Posterior vena cava (tissue), 2 donors: ENCODE measurements at regions of chr15 and their contacts with region 1.

Region 1: GRCh38 chr15:23897531-23897930 is 210.4 kb upstream of the NDN start:
- DNase-seq: no peak

Region 2: GRCh38 chr15:23857028-23857641 is 40.4 kb before region 1 on chr15:
- intact Hi-C with region 1: no loop called
- DNase-seq: no peak

Region 3: GRCh38 chr15:23877502-23878412 is 19.8 kb before region 1 on chr15:
- intact Hi-C with region 1: loop called in 1 of 2 experiments (anchors 2 kb)
- DNase-seq: no peak